Activated T-helper 2 cell treated with anti-CD3 and anti-CD28 coated beads, Interferon-gamma antibody, Interleukin-2, Interleukin-4, amounts not matched to agents 10 μg/mL and 5 μg/mL and 100 μg/mL, durations not matched to agents 14 hours and 24 hours and 36 hours (primary cell): ENCODE measurements at regions of chr15 and their contacts with region 1.

Region 1: GRCh38 chr15:72272213-72273002 is at the start of gene PARP6:
- DNase-seq: peak; percentile 99
- H3K4me3 Mint-ChIP-seq: peak within 1 kb of the TSS; percentile 93
- H3K27ac Mint-ChIP-seq: peak within 1 kb of the TSS; percentile 84
- H3K4me1 Mint-ChIP-seq: peaks cover 32% of the 10 kb centered on the region
- H3K27me3 Mint-ChIP-seq: peaks cover 6% of the 10 kb centered on the region
- total RNA-seq, gene PARP6: 65.4 and 73.1 TPM in 2 replicates

Region 2: GRCh38 chr15:72117486-72118399 is 154.7 kb before region 1 on chr15 and contains the start of gene MYO9A:
- intact Hi-C with region 1: loop called (anchors 2 kb)
- DNase-seq: peak; percentile 95
- H3K4me3 Mint-ChIP-seq: peak within 1 kb of the TSS; percentile 90
- H3K27ac Mint-ChIP-seq: peak within 1 kb of the TSS; percentile 97
- H3K4me1 Mint-ChIP-seq: peaks cover 30% of the 10 kb centered on the region
- H3K27me3 Mint-ChIP-seq: peaks cover 8% of the 10 kb centered on the region
- total RNA-seq, gene MYO9A: 25.1 and 26.2 TPM in 2 replicates

Region 3: DNA sequence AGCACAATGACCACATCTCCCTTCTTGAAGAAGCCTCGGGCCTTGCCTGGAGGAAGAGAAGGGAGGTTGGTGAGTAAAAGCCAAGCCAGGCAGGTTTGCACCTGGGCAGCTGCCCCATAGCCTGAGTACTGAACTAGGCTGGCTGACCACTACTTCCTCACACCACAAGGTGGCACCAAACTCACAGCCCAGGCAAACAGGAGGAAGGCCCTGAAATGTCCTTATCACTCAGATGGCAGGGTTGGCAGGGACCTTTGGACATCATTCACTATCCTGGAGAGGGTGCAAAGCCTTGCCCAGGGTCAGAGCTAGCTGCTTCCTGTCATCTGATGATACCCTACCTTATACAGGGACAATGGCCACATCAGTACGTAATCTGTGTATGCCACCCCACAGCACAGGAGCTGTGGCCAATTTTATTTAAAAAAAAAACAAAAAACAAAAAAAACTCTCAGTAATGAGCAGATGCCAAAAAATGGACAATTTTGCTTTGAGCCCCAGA is 72.6 kb before region 1 on chr15:
- intact Hi-C with region 1: loop called (anchors 1 kb)
- DNase-seq: peak; percentile 58
- H3K4me3 Mint-ChIP-seq: no peak overlapping the region
- H3K27ac Mint-ChIP-seq: no peak overlapping the region
- H3K4me1 Mint-ChIP-seq: peaks cover 15% of the 10 kb centered on the region
- H3K27me3 Mint-ChIP-seq: peaks cover 6% of the 10 kb centered on the region

Region 4: DNA sequence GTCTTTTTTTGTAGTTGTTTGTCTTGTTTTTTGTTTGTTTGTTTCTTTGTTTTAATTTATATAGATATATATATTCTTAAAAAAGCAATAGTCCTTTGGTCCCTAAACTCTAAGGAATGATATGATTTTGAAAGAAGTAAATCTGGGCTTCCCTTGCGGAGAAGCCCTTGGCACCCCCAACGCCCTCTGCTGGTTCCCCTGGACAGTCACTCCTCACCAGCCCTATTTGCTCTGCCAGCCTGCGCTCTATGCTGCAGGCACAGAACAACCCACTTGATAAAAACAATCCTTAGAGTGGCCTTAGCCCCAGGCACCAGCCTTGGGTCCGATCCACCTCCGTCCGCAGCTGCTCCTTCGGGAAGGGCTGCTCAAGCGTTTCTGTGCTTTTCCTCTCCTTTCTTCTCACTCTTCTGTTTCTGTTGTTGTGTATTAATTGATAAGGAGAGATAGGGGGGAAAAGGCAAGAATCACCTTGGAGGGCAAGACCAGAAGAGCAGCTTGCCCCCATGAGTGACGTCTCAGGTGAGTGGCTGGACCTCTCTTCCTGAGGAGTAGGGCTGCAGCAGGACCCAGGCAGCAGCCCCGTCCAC is 13.6 kb after region 1 on chr15:
- intact Hi-C with region 1: no loop called
- DNase-seq: no peak
- H3K4me3 Mint-ChIP-seq: no peak overlapping the region
- H3K27ac Mint-ChIP-seq: no peak overlapping the region
- H3K4me1 Mint-ChIP-seq: no peaks in the 10 kb centered on the region
- H3K27me3 Mint-ChIP-seq: peaks cover 1% of the 10 kb centered on the region

Region 5: GRCh38 chr15:72375847-72376581 is 103.6 kb after region 1 on chr15 and contains the start of gene HEXA:
- intact Hi-C with region 1: loop called (anchors 5 kb)
- DNase-seq: peak; percentile 96
- H3K4me3 Mint-ChIP-seq: peak within 1 kb of the TSS; percentile 89
- H3K27ac Mint-ChIP-seq: peak within 1 kb of the TSS; percentile 91
- H3K4me1 Mint-ChIP-seq: peaks cover 27% of the 10 kb centered on the region
- H3K27me3 Mint-ChIP-seq: peaks cover under 1% of the 10 kb centered on the region
- total RNA-seq, gene HEXA: 58.2 and 63.4 TPM in 2 replicates

Region 6: GRCh38 chr15:72404841-72405240 is 132.4 kb after region 1 on chr15:
- intact Hi-C with region 1: no loop called
- DNase-seq: no peak
- H3K4me3 Mint-ChIP-seq: no peak overlapping the region
- H3K27ac Mint-ChIP-seq: no peak overlapping the region
- H3K4me1 Mint-ChIP-seq: no peaks in the 10 kb centered on the region
- H3K27me3 Mint-ChIP-seq: peaks cover 19% of the 10 kb centered on the region

Region 7: GRCh38 chr15:72473614-72474465 is 201.4 kb after region 1 on chr15 and contains the start of gene ARIH1:
- intact Hi-C with region 1: loop called (anchors 5 kb)
- DNase-seq: peak; percentile 95
- H3K4me3 Mint-ChIP-seq: peak within 1 kb of the TSS; percentile 95
- H3K27ac Mint-ChIP-seq: peak within 1 kb of the TSS; percentile 99
- H3K4me1 Mint-ChIP-seq: peaks cover 31% of the 10 kb centered on the region
- H3K27me3 Mint-ChIP-seq: no peaks in the 10 kb centered on the region
- total RNA-seq, gene ARIH1: 139 and 141 TPM in 2 replicates